ENCODE measurements at regions of chr3 and their contacts with region 1.

Region 1: DNA sequence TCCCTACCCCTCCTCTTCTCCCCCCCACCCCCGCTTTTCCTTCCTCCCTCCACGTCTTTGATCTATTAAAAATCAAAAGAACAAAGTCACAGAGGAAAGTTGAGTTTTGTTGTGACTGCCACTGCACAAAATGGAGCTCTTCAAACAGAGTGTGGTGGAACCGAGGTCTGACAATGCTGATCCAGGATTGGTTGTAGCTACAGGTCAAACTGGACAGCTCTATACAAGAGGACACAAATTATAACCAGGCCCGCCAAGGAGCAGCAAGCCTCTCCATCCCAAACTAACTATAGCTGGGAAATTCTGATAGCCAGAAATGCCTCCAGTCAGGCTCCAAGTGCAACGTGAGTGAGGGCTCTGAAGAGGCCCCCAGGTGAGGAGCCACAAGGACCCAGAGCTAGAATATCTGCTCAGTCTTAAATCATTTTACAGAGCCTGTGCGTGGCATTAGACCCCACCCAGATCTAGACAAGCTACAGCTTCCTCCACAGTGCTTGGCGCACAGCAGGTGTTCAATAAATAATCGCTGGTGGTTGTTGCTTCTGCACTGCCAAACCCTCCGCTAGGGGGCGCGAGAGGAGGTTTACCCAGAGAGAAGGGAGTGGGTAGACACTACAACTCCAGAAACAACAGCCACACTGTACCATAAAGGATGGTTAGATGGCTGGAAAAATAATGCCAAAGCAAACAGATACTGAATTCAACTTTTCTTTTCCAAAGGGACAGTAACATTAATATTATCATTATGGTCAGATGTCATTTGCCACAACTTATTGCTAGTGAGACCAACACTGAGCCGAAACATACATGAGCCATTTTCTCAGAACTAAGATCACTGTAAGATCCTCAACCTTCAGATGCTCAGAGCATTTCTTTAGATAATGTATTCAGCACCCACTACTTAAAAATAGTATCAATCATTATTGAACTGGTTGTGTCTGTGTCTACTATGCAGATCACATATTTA is 44.6 kb downstream of the ZIC4 start:
- DNase-seq: peak; percentile 78
- ATAC-seq: no peak
- H3K4me3 Mint-ChIP-seq: no peak overlapping the region
- H3K27ac Mint-ChIP-seq: no peak overlapping the region
- H3K4me1 Mint-ChIP-seq: peaks cover 5% of the 10 kb centered on the region
- H3K27me3 Mint-ChIP-seq: peaks cover 57% of the 10 kb centered on the region

Region 2: DNA sequence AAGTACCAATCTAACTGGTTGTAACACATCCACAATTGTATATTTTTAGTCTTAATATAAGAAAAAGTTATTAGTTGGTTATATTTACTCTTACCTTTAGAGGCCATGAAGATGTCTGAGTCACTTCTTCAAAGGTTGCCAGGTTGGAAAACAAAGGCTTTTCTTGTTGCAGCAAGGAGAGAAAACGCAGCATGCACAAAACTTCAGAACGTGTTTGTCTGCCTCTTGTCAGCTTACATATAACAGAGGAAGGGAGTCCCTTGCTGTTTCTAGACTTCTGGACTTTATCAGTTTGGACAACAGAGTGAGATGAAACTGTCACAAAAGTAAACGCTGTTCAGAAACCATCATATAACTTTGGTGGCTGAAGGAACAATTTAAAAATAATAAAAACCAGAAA is 756.6 kb before region 1 on chr3 and contains the start of gene PLSCR5:
- CTCF ChIA-PET with region 1: no interaction called
- POLR2A ChIA-PET with region 1: no interaction called
- intact Hi-C with region 1: no loop called
- DNase-seq: no peak
- ATAC-seq: no peak
- H3K4me3 Mint-ChIP-seq: no peak within 1 kb of the TSS
- H3K27ac Mint-ChIP-seq: no peak within 1 kb of the TSS
- H3K4me1 Mint-ChIP-seq: no peaks in the 10 kb centered on the region
- H3K27me3 Mint-ChIP-seq: peaks cover 6% of the 10 kb centered on the region
- total RNA-seq, gene PLSCR5: not detected

Region 3: DNA sequence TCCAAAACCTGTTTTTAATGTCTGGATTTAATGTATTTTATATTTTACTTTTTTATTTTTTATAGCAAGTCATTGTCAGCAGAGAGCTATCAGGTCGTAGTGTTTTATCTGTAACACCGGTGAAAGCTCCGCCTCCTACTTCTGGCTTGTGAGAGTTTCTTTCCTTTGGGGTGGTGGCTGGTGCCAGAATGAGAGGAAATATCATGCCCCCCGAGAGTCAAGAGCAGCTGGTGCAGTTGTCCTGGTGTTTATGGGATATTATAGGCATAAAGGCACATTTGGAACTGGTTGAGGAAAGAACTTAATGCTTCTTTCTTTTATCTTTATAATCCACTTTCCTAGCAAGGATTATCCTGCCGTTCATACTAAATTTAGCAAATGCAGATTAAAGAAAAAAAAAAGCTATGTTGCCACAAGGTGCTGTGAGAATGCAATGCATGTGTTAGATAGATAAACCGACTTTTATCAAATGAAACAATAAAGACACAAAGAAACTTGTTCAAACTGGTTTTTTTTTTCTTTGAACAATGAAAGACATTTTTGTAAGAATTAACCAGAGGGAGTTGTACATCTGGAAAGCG is 496.5 kb before region 1 on chr3:
- CTCF ChIA-PET with region 1: no interaction called
- POLR2A ChIA-PET with region 1: no interaction called
- intact Hi-C with region 1: no loop called
- DNase-seq: no peak
- ATAC-seq: no peak
- H3K4me3 Mint-ChIP-seq: no peak overlapping the region
- H3K27ac Mint-ChIP-seq: no peak overlapping the region
- H3K4me1 Mint-ChIP-seq: no peaks in the 10 kb centered on the region
- H3K27me3 Mint-ChIP-seq: no peaks in the 10 kb centered on the region

Region 4: GRCh38 chr3:147410526-147411237 is 48.9 kb after region 1 on chr3:
- CTCF ChIA-PET with region 1: no interaction called
- POLR2A ChIA-PET with region 1: no interaction called
- intact Hi-C with region 1: loop called (anchors 5 to 10 kb)
- DNase-seq: peak; percentile 31
- ATAC-seq: no peak
- H3K4me3 Mint-ChIP-seq: peak overlapping the region; percentile 54
- H3K27ac Mint-ChIP-seq: no peak overlapping the region
- H3K4me1 Mint-ChIP-seq: peaks cover 44% of the 10 kb centered on the region
- H3K27me3 Mint-ChIP-seq: peaks cover 73% of the 10 kb centered on the region

Region 5: DNA sequence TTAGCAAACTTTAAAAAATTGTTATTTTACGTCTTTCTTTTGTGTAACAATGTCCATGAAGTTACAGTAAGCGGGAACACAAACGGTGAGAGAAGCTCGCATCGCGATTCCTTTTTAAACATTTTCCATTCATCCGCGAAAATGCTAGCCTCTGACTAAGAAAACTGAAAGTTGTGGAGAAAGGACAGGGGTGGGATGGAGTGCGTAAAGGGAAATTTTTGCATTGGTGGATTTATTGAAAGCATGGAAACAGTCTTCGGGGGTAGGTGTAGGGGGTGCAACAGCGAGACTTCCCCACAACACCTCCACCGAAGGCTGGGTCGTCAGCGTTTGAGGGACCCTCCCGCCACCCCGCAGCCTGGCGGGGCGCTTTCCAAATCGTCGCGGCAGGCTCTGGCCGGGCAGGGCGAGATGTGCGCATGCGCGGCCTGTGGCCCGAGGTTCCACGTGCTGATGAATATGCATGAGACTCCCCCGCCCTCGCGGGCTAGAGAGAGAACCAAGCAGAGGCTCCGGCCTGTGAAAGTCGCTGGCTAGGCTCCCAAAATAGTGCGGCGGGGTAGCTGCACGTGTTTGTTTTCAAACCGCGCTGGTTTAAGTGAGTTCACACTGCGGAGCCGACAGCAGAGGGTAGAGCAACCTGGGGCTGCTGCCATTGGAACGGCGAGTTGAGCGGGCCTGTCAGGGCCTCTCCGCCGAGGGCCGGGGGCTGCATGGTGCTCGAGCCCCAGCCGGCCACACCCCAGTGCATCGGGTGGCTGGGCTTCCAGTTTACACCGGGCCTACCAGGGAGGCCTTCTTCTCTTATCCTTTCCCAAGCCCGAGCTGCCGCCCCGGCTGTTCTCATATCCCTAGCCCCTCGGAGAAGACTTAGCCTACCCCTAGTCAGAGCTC is 57.3 kb after region 1 on chr3:
- CTCF ChIA-PET with region 1: no interaction called
- POLR2A ChIA-PET with region 1: no interaction called
- intact Hi-C with region 1: loop called (anchors 5 to 10 kb)
- DNase-seq: peak; percentile 39
- ATAC-seq: no peak
- H3K4me3 Mint-ChIP-seq: no peak overlapping the region
- H3K27ac Mint-ChIP-seq: no peak overlapping the region
- H3K4me1 Mint-ChIP-seq: peaks cover 3% of the 10 kb centered on the region
- H3K27me3 Mint-ChIP-seq: peaks cover 82% of the 10 kb centered on the region

Region 6: GRCh38 chr3:147544290-147544689 is 182.6 kb after region 1 on chr3:
- CTCF ChIA-PET with region 1: no interaction called
- POLR2A ChIA-PET with region 1: no interaction called
- intact Hi-C with region 1: no loop called
- DNase-seq: no peak
- ATAC-seq: no peak
- H3K4me3 Mint-ChIP-seq: no peak overlapping the region
- H3K27ac Mint-ChIP-seq: no peak overlapping the region
- H3K4me1 Mint-ChIP-seq: no peaks in the 10 kb centered on the region
- H3K27me3 Mint-ChIP-seq: no peaks in the 10 kb centered on the region